ENCODE measurements at regions of chr10 and their contacts with region 1.

Region 1: DNA sequence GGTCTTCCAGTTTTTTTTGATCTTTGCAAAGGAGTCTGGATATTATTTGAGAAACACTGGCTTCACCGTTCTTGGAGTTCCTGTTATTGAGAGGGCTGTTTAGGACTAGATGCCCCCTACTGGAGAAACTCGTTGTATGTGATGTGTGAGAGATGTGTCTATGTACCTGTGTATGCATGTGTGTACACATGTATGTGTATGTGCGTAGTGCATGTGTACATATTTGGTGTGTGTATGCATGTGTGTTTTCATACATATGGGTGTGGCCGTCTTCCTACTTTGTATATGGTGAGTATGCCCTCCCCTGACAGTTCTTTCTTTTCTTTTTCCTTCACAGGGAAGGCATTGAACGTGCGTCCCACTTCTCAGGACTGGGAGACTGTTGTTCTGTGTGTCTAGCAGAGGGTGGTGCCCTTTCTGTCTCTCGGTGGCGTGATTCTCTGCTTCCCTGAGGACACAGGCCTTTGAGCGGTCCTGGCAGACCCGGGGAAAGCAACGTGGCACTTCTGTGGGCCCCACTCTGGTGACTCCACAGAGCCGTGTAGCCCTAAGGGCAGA is 3.0 kb upstream of the CALHM3 start:
- DNase-seq: peak; percentile 42
- H3K4me3 ChIP-seq: no peak overlapping the region
- H3K27ac ChIP-seq: no peak overlapping the region
- H3K4me1 ChIP-seq: peaks cover 14% of the 10 kb centered on the region
- H3K27me3 ChIP-seq: no peaks in the 10 kb centered on the region
- CTCF ChIP-seq: peak; percentile 72 to 86

Region 2: GRCh38 chr10:103333925-103334520 is 148.0 kb before region 1 on chr10:
- CTCF ChIA-PET with region 1: no interaction called
- dilution Hi-C with region 1: no loop called
- in situ Hi-C with region 1: no loop called
- intact Hi-C with region 1: no loop called
- DNase-seq: no peak
- H3K4me3 ChIP-seq: no peak overlapping the region
- H3K27ac ChIP-seq: no peak overlapping the region
- H3K4me1 ChIP-seq: no peaks in the 10 kb centered on the region
- H3K27me3 ChIP-seq: no peaks in the 10 kb centered on the region
- CTCF ChIP-seq: peak; percentile 57 to 70

Region 3: DNA sequence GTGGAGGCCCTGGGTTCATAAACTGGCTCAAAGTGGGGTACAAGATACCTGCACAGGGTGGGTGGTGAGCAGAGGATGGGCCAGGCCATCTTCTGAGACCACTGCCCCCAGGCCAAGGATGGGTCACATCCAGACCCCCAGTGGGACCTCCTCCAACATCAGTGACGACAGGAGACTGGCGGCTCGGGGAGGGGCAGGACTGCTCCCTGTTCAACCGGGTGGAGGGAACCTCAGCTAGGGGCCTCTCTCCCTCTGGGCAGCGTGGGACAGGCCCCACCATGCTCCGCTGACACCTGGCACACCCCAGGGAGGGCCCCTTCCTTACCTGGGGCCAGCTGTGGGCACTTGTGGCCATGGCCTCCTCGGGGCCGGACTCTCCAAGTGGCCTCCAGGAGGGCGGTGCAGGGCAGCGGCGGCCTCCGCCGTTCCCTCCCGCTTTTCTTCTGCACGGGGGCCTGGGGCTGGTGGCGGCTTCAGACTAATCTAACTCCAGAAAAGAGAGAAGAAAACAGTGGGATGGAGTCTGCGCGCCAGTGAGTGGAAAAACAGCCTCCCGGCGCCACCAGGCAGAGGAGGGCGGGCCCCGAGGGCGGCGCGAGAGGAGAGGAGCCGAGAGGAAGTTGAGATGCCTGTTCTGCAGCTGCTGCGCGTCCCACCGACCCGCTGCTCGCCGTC is 30.1 kb before region 1 on chr10 and contains the start of gene CALHM2:
- CTCF ChIA-PET with region 1: no interaction called
- dilution Hi-C with region 1: no loop called
- in situ Hi-C with region 1: no loop called
- intact Hi-C with region 1: loop called (anchors 2 kb)
- DNase-seq: peak; percentile 27
- H3K4me3 ChIP-seq: peak within 1 kb of the TSS; percentile 47 to 54 (median 53)
- H3K27ac ChIP-seq: no peak within 1 kb of the TSS
- H3K4me1 ChIP-seq: peaks cover 32% of the 10 kb centered on the region
- H3K27me3 ChIP-seq: no peaks in the 10 kb centered on the region
- CTCF ChIP-seq: no peak
- total RNA-seq, gene CALHM2: 3.2 to 4.8 TPM

Measured in mammary epithelial cell (primary cell).